ENCODE measurements at regions of chr3 and their contacts with region 1.

Region 1: DNA sequence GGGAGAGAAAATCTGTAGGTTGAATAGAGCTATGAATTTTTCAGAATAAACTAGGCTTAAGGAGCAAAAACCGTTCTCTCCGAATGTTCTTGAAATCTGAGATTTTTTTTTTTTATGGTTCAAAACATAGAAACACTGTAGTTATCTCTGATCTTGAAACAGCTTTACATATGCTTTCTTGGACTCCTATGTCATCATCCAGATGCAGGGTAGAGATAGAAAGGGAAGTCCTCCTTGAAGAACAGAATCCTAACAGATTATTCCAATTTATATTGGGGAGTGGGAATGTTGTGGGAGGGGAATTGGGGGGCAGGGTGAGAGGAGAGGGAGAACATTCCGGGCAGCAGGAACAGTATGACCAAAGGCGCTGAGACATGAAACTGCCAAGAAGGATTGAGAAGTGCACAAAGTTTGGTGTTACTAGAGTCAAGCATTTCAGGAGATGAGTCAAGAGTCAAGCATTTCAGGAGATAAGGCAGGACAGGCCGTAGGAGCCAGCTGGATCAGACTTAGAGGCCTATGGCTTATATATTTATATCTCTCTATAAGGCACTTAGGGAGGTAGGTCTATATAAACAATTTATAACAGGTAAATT is 21.9 kb upstream of the ST3GAL6 start:
- DNase-seq: peak; percentile 71
- ATAC-seq: peak; percentile 91
- H3K4me3 ChIP-seq: no peak overlapping the region
- H3K27ac ChIP-seq: no peak overlapping the region
- H3K4me1 ChIP-seq: peaks cover 26% of the 10 kb centered on the region
- H3K27me3 ChIP-seq: no peaks in the 10 kb centered on the region
- CTCF ChIP-seq: no peak

Region 2: DNA sequence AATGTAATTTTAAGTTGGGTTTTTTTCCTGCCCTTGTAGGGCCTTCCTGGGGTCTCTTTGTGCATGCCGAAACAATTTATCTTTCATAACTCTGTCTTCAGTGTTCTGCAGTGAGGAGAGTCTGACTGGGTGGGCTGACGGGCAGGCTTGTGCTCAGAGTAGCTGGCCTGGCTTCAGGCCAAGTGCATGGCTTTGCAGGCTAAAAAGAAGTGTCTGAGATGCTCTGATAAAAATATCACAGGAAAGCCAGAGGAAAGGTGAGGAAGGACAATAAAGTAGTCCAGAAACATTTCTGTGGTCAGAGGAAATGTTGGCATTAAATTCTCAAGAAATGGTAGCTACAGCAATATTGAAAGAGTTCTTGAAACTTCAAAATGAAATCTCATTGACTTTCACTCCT is 47.4 kb after region 1 on chr3:
- CTCF ChIA-PET with region 1: no interaction called
- POLR2A ChIA-PET with region 1: no interaction called
- intact Hi-C with region 1: loop called (anchors 5 kb)
- DNase-seq: no peak
- ATAC-seq: no peak
- H3K4me3 ChIP-seq: no peak overlapping the region
- H3K27ac ChIP-seq: no peak overlapping the region
- H3K4me1 ChIP-seq: peaks cover 14% of the 10 kb centered on the region
- H3K27me3 ChIP-seq: no peaks in the 10 kb centered on the region
- CTCF ChIP-seq: no peak

Measured in PC-3 (cell line).